AG04450 (cell line): ENCODE measurements at regions of chr19 and their contacts with region 1.

Region 1: GRCh38 chr19:51338563-51339312 is 3.2 kb downstream of the VSIG10L start:
- DNase-seq: no peak
- H3K4me3 ChIP-seq: peak overlapping the region; percentile 75
- H3K27ac ChIP-seq: no peak overlapping the region
- H3K27me3 ChIP-seq: no peaks in the 10 kb centered on the region
- CTCF ChIP-seq: peak; percentile 86

Region 2: DNA sequence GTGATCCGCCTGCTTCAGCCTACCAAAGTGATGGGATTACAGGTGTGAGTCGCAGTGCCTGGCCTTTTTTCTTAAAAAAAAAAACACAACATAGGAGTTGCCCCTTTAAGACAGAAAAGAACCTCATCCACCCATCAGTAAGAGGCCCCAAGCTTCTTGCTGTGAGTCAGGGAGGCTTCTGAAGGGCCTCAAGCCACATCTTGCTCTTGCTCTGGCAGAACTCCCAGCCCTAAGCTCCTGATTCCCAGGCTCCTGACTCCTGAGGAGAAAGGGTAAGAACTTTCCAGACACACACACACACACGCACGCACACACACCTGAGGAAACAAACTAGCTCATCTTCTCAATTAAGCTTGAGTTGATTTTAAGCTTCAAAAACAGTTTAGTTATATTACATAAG is 20.6 kb after region 1 on chr19:
- CTCF ChIA-PET with region 1: interaction called, 17 read pairs
- POLR2A ChIA-PET with region 1: interaction called, 13 read pairs
- DNase-seq: peak; percentile 79
- H3K4me3 ChIP-seq: no peak overlapping the region
- H3K27ac ChIP-seq: peak overlapping the region; percentile 78
- H3K27me3 ChIP-seq: no peaks in the 10 kb centered on the region
- CTCF ChIP-seq: no peak

Region 3: GRCh38 chr19:51367565-51368365 is 29.0 kb after region 1 on chr19:
- CTCF ChIA-PET with region 1: interaction called, 7 read pairs
- POLR2A ChIA-PET with region 1: interaction called, 28 read pairs
- DNase-seq: peak; percentile 98
- H3K4me3 ChIP-seq: peak overlapping the region; percentile 83
- H3K27ac ChIP-seq: peak overlapping the region; percentile 81
- H3K27me3 ChIP-seq: peaks cover 6% of the 10 kb centered on the region
- CTCF ChIP-seq: no peak

Region 4: GRCh38 chr19:51514866-51515481 is 176.2 kb after region 1 on chr19:
- CTCF ChIA-PET with region 1: interaction called, 11 read pairs
- POLR2A ChIA-PET with region 1: no interaction called
- DNase-seq: peak; percentile 7
- H3K4me3 ChIP-seq: no peak overlapping the region
- H3K27ac ChIP-seq: no peak overlapping the region
- H3K27me3 ChIP-seq: no peaks in the 10 kb centered on the region
- CTCF ChIP-seq: peak; percentile 76